Natural killer cell (primary cell): ENCODE measurements at regions of chr5 and their contacts with region 1.

Region 1: DNA sequence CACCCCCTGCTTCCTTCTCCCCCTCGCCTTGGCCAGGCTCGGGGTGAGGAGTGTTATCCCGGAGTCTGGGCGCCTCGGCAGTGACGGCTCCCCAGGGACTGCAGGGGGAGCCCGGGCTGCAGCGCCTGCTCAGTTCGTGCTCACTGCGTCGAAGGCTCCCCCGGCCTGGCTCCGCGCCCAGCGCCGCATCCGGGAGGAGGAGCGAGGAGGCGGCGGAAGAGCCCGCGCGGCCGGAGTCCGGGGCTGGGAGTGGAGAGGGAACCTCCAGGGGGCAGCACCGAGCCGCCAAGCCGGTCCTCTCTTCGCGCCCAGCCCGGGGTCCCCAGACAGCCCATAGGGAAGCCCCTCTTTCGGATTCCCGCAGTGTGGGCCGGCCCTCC is 1.3 kb upstream of the EGR1 start:
- DNase-seq: peak; percentile 95 to 98
- ATAC-seq: peak; percentile 52 to 79 (median 57)
- H3K4me3 ChIP-seq: peak overlapping the region; percentile 83
- H3K4me3 Mint-ChIP-seq: peak overlapping the region; percentile 93
- H3K27ac ChIP-seq: peak overlapping the region; percentile 97
- H3K27ac Mint-ChIP-seq: peak overlapping the region; percentile 93 to 95
- H3K4me1 ChIP-seq: peaks cover 48% of the 10 kb centered on the region
- H3K4me1 Mint-ChIP-seq: peaks cover 30 to 53% of the 10 kb centered on the region in 2 donors
- H3K27me3 ChIP-seq: no peaks in the 10 kb centered on the region
- H3K27me3 Mint-ChIP-seq: no peaks in the 10 kb centered on the region
- CTCF ChIP-seq: peak; percentile 99

Region 2: GRCh38 chr5:138216799-138217198 is 247.2 kb before region 1 on chr5:
- intact Hi-C with region 1: no loop called
- DNase-seq: no peak
- ATAC-seq: no peak
- H3K4me3 ChIP-seq: no peak overlapping the region
- H3K4me3 Mint-ChIP-seq: no peak overlapping the region
- H3K27ac ChIP-seq: no peak overlapping the region
- H3K27ac Mint-ChIP-seq: no peak overlapping the region
- H3K4me1 ChIP-seq: peaks cover 16% of the 10 kb centered on the region
- H3K4me1 Mint-ChIP-seq: peaks cover 13 to 16% of the 10 kb centered on the region in 2 donors
- H3K27me3 ChIP-seq: no peaks in the 10 kb centered on the region
- H3K27me3 Mint-ChIP-seq: peaks cover 0 to 6% of the 10 kb centered on the region in 2 donors
- CTCF ChIP-seq: no peak

Region 3: GRCh38 chr5:138331449-138332368 is 132.3 kb before region 1 on chr5 and contains the start of gene CDC25C:
- intact Hi-C with region 1: loop called (anchors 1 kb)
- DNase-seq: peak; percentile 94 to 99
- ATAC-seq: peak; percentile 99 to 100 (median 99)
- H3K4me3 ChIP-seq: peak within 1 kb of the TSS; percentile 46
- H3K4me3 Mint-ChIP-seq: peak within 1 kb of the TSS; percentile 99
- H3K27ac ChIP-seq: peak within 1 kb of the TSS; percentile 37
- H3K27ac Mint-ChIP-seq: peak within 1 kb of the TSS; percentile 75 to 86
- H3K4me1 ChIP-seq: peaks cover 14% of the 10 kb centered on the region
- H3K4me1 Mint-ChIP-seq: peaks cover 15 to 17% of the 10 kb centered on the region in 2 donors
- H3K27me3 ChIP-seq: no peaks in the 10 kb centered on the region
- H3K27me3 Mint-ChIP-seq: no peaks in the 10 kb centered on the region
- CTCF ChIP-seq: no peak
- total RNA-seq, gene CDC25C: 0.47 to 0.48 TPM in 2 of 3 donors, not detected in the other

Region 4: GRCh38 chr5:138491669-138492559 is 27.9 kb after region 1 on chr5:
- intact Hi-C with region 1: loop called (anchors 1 kb)
- DNase-seq: peak; percentile 75 to 94
- ATAC-seq: peak; percentile 97 to 100 (median 99)
- H3K4me3 ChIP-seq: peak overlapping the region; percentile 47
- H3K4me3 Mint-ChIP-seq: peak overlapping the region; percentile 94
- H3K27ac ChIP-seq: no peak overlapping the region
- H3K27ac Mint-ChIP-seq: peak overlapping the region; percentile 62 to 82
- H3K4me1 ChIP-seq: peaks cover 16% of the 10 kb centered on the region
- H3K4me1 Mint-ChIP-seq: peaks cover 5 to 10% of the 10 kb centered on the region in 2 donors
- H3K27me3 ChIP-seq: peaks cover 26% of the 10 kb centered on the region
- H3K27me3 Mint-ChIP-seq: peaks cover 15 to 18% of the 10 kb centered on the region in 2 donors
- CTCF ChIP-seq: no peak

Region 5: DNA sequence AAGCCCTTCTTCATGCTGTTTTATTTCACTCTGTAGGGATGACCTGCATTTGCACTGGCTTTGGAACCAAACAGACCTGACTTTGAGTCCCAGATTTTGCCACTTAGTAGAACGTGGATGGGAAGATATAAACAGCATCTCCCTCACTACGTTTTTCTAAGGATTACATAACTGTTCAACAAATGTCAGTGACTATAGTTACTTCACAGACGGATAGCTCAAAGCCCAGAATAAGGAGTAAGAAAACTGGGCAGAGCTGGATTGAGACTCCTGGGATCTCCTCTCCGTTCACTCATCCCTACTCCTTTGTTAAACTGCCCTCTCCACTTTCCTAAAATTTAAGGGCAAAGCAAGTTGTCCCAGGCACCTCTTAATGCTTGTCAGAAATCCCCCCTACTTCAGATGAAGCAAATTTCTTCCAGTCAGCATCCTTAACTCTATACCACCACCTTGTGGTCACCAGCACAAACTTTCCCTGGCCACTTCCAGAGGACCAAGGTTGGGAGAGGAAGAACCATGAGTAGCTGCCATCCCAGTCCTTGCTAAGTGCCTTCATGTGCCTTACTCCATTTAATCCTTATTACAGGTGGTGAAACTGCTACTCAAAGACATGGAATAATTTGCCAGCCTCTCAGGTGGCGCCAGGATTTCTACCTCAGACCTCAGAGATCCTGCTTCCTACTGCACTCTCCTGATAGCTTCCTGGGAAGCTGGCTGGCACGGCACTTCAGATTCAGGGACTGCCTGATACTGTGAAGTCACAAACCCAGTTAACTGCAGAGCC is 39.7 kb after region 1 on chr5:
- intact Hi-C with region 1: loop called (anchors 2 kb)
- DNase-seq: peak in 1 of 2 donors; percentile 81
- ATAC-seq: peak; percentile 71 to 91 (median 78)
- H3K4me3 ChIP-seq: no peak overlapping the region
- H3K4me3 Mint-ChIP-seq: no peak overlapping the region
- H3K27ac ChIP-seq: no peak overlapping the region
- H3K27ac Mint-ChIP-seq: peak overlapping the region in 1 of 2 donors; percentile 44
- H3K4me1 ChIP-seq: no peaks in the 10 kb centered on the region
- H3K4me1 Mint-ChIP-seq: peaks cover 0 to 5% of the 10 kb centered on the region in 2 donors
- H3K27me3 ChIP-seq: no peaks in the 10 kb centered on the region
- H3K27me3 Mint-ChIP-seq: no peaks in the 10 kb centered on the region
- CTCF ChIP-seq: peak; percentile 64

Region 6: DNA sequence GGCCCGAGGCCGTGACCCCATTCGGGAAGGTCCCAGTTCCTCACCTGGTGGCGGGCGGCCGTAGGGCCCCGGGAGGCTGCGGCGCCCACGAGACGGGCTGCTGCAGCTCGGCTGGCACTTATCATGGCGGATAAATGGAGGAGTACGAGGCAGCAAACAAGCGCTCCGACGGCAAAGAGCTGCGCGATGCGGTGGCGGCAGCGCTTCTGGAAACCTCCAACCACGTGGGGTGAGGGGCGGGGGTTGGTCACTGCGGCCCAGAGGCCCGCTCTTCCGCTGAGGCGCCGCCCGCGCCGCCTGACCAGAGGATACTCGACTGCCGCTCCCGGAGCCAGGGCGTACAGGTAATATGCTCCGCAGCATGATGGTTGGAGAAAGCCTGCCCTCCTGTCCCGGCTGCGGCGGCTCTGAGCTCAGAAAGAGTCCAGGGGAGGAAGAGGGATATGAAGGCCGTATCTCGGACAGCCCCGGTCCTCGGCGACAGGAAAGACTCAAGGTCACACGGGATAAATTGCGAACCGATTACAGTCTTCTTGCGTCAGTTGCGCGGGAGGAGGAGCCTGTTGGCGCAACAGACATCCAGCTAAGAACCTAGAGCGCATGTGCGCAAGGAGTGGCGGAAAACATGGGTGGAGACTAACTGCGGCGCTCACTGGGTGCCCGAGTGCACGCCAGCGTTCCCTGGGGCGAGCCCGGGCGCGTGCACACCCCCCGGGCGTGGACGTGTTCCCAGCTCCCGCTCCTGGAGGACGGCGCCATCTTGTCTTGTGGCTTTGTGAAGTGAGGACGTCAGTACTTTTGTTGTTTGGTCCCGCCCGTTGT is 111.4 kb after region 1 on chr5 and contains the start of gene HSPA9:
- intact Hi-C with region 1: loop called (anchors 1 kb)
- DNase-seq: peak; percentile 95 to 100
- ATAC-seq: peak; percentile 79 to 92 (median 85)
- H3K4me3 ChIP-seq: peak within 1 kb of the TSS; percentile 86
- H3K4me3 Mint-ChIP-seq: peak within 1 kb of the TSS; percentile 98
- H3K27ac ChIP-seq: peak within 1 kb of the TSS; percentile 98
- H3K27ac Mint-ChIP-seq: peak within 1 kb of the TSS; percentile 100
- H3K4me1 ChIP-seq: peaks cover 18% of the 10 kb centered on the region
- H3K4me1 Mint-ChIP-seq: peaks cover 21 to 33% of the 10 kb centered on the region in 2 donors
- H3K27me3 ChIP-seq: no peaks in the 10 kb centered on the region
- H3K27me3 Mint-ChIP-seq: no peaks in the 10 kb centered on the region
- CTCF ChIP-seq: no peak
- total RNA-seq, gene HSPA9: 272 to 308 (median 308) TPM

Region 7: GRCh38 chr5:138981586-138981985 is 517.6 kb after region 1 on chr5:
- intact Hi-C with region 1: no loop called
- DNase-seq: peak in 1 of 2 donors; percentile 57
- ATAC-seq: peak in 2 of 3 donors; percentile 25 to 50
- H3K4me3 ChIP-seq: no peak overlapping the region
- H3K4me3 Mint-ChIP-seq: peak overlapping the region; percentile 2
- H3K27ac ChIP-seq: no peak overlapping the region
- H3K27ac Mint-ChIP-seq: peak overlapping the region in 1 of 2 donors; percentile 8
- H3K4me1 ChIP-seq: peaks cover 23% of the 10 kb centered on the region
- H3K4me1 Mint-ChIP-seq: peaks cover 32 to 40% of the 10 kb centered on the region in 2 donors
- H3K27me3 ChIP-seq: no peaks in the 10 kb centered on the region
- H3K27me3 Mint-ChIP-seq: no peaks in the 10 kb centered on the region
- CTCF ChIP-seq: no peak

Region 8: GRCh38 chr5:139335811-139336210 is 871.8 kb after region 1 on chr5:
- intact Hi-C with region 1: no loop called
- DNase-seq: peak in 1 of 2 donors; percentile 40
- ATAC-seq: peak; percentile 14 to 30 (median 30)
- H3K4me3 ChIP-seq: no peak overlapping the region
- H3K4me3 Mint-ChIP-seq: peak overlapping the region; percentile 40
- H3K27ac ChIP-seq: no peak overlapping the region
- H3K27ac Mint-ChIP-seq: peak overlapping the region; percentile 56 to 73
- H3K4me1 ChIP-seq: peaks cover 2% of the 10 kb centered on the region
- H3K4me1 Mint-ChIP-seq: peaks cover under 1 to 7% of the 10 kb centered on the region in 2 donors
- H3K27me3 ChIP-seq: no peaks in the 10 kb centered on the region
- H3K27me3 Mint-ChIP-seq: no peaks in the 10 kb centered on the region
- CTCF ChIP-seq: no peak

Region 9: GRCh38 chr5:139787568-139788293 is 1323.7 kb after region 1 on chr5:
- intact Hi-C with region 1: no loop called
- DNase-seq: peak; percentile 85 to 89
- ATAC-seq: peak; percentile 88 to 92 (median 91)
- H3K4me3 ChIP-seq: peak overlapping the region; percentile 81
- H3K4me3 Mint-ChIP-seq: peak overlapping the region; percentile 84
- H3K27ac ChIP-seq: no peak overlapping the region
- H3K27ac Mint-ChIP-seq: no peak overlapping the region
- H3K4me1 ChIP-seq: peaks cover 16% of the 10 kb centered on the region
- H3K4me1 Mint-ChIP-seq: no peaks in the 10 kb centered on the region
- H3K27me3 ChIP-seq: no peaks in the 10 kb centered on the region
- H3K27me3 Mint-ChIP-seq: peaks cover 8 to 25% of the 10 kb centered on the region in 2 donors
- CTCF ChIP-seq: peak; percentile 98